ENCODE measurements at regions of chr2 and their contacts with region 1.

Region 1: GRCh38 chr2:237085248-237086221 is at the start of gene COPS8:
- DNase-seq: peak; percentile 86
- H3K27ac ChIP-seq: peak within 1 kb of the TSS; percentile 94
- CTCF ChIP-seq: peak; percentile 26; the same call in 1 of the 2 replicates

Region 2: DNA sequence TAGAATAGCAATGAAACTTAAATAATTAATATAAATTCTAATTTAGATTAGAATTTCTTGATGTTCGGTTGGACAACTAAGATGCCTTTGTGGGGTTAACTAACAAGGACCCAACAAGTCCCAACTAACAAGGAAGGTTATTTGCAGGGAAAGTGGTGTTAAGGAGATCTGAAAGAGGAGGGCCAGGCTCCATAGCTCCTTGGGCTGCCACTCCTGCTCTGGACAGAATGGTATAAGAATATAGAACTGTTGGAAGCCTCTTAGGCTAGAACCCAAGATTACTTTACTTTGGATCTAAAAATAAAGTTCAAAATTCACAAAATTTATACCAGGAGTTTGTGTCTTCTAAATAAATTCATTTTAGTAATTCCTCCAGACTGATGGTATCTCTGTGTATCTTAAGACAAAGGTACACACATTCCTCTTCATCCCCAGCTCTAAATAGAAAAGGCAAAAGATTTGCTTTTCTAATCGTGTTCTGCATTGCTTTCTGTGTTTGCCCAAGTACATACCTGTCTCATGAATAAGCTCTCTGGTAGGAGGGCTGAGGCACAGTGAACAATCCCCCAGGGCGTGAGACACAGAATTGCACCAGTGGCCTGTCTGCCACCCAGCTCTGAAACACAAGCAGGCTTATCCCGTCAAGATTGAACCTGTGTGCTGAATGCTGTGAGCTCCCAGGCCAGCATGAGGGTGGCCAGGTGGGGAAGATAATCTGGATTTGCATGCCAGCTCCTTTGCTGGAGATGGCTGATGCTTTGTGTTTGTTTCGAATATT is 339.9 kb before region 1 on chr2:
- CTCF ChIA-PET with region 1: no interaction called
- POLR2A ChIA-PET with region 1: no interaction called
- DNase-seq: peak; percentile 95
- H3K27ac ChIP-seq: peak overlapping the region; percentile 81
- CTCF ChIP-seq: no peak

Region 3: DNA sequence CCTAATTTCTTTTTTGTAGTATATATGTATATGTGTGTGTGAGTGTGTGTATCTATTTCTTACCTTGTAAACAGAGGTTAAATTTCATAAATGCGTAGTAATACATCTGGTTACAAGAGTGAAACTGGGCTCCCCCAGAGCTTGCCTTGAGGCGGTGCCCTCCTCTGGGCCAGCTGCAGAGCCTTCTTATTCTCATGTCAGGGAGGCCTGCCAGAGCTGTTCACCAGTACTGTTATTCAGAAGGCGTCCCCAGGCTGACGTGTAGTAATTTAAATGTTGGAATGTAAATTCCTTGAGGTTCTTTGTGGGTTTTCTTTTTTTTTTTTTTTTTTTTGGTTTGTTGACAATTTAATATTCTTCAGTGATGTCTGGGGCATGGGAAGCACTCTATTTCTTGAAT is 11.4 kb after region 1 on chr2:
- CTCF ChIA-PET with region 1: interaction called, 3 read pairs
- POLR2A ChIA-PET with region 1: interaction called, 11 read pairs
- DNase-seq: no peak
- H3K27ac ChIP-seq: peak overlapping the region; percentile 96
- CTCF ChIP-seq: no peak

Measured in RWPE1 (cell line).